Activated naive CD4-positive, alpha-beta T cell treated with anti-CD3 and anti-CD28 coated beads for 36 hours (primary cell): ENCODE measurements at regions of chr17 and their contacts with region 1.

Region 1: GRCh38 chr17:42287926-42288802 is at the start of gene STAT5A:
- DNase-seq: peak; percentile 88
- H3K4me3 Mint-ChIP-seq: peak within 1 kb of the TSS; percentile 86
- H3K27ac Mint-ChIP-seq: peak within 1 kb of the TSS; percentile 95
- H3K4me1 Mint-ChIP-seq: peaks cover 68% of the 10 kb centered on the region
- H3K27me3 Mint-ChIP-seq: no peaks in the 10 kb centered on the region
- total RNA-seq, gene STAT5A: 165 to 174 TPM

Region 2: DNA sequence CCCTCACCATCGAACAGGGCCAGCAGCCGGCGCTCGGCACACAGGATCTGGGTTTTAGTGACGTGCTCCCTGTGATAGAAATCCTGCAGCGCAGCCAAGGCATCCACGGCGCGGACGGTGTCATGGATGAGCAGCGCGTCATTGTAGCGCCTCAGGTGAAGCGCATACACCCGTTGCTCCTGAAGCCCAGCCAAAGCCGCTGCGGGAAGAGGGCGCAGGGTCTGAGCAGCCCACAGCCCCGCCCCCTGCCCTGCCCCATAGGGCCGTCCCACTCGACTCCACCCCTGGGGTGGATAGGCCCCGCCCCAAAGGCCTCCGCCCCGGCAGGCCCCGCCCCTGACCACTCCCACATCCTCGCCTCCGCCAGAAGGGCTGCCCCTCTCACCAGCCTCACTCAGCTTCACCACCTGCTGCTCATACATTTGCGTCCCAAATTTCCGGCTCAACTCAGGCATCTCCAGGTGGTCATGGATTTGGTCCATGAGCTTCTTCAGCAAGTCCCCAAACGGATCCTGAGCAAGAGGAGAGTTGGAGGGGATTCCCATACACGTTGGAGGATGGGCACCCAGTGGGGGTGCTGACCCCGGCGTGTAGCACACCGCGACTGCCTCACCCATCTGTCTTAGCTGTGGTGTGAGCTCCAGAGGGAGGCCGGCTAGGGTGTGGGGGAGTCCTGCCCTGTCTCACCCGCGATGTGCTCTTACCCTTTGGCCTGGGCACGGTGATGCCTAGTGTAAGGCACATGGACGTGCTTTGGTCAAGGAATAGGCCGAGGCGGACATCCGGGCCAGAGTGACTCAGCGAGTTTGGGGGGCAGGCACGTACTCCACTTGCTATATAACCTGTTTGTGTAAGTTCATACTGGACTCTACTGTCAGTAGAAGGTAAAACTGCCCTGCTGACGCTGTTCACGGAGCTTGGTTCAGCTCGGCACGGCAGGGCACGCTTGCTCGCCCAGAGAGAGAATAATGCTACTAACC is 180.3 kb before region 1 on chr17:
- CTCF ChIA-PET with region 1: no interaction called
- intact Hi-C with region 1: no loop called
- DNase-seq: peak; percentile 95
- H3K4me3 Mint-ChIP-seq: peak overlapping the region; percentile 66
- H3K27ac Mint-ChIP-seq: no peak overlapping the region
- H3K4me1 Mint-ChIP-seq: peaks cover 34% of the 10 kb centered on the region
- H3K27me3 Mint-ChIP-seq: no peaks in the 10 kb centered on the region

Region 3: DNA sequence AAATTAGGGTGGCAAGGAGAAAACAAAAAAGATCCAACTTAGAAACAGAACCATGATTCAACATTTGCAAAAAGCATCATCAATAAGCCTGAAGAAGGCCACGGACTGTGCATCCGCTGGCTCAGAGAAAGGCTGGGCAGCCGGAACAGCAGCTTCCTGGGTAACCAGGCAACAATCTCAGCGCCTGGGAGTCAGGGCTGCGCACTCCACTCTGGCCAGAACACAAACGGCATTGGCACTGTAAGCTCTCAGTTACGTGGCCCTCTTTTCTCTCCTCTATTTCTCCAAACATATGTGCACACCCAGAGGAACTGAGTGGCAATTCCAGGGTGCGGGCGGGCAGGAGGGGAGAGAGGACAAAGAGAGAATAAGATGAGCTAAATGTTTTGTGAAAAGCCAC is 87.5 kb before region 1 on chr17:
- CTCF ChIA-PET with region 1: no interaction called
- intact Hi-C with region 1: no loop called
- DNase-seq: no peak
- H3K4me3 Mint-ChIP-seq: no peak overlapping the region
- H3K27ac Mint-ChIP-seq: peak overlapping the region; percentile 25
- H3K4me1 Mint-ChIP-seq: peaks cover 2% of the 10 kb centered on the region
- H3K27me3 Mint-ChIP-seq: no peaks in the 10 kb centered on the region

Region 4: DNA sequence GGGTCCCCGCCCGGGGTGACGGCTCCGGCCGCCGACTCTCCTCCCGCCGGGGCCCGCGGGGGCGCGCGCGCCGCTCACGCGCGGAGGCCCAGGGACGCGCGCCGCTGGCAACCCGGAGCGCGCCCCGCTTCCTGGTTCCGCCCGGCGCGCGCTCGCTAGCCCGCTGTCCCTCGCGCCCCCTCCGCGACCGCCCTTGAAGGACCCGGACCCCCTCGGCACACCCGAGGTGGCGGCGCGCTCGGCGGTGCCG is 11.9 kb before region 1 on chr17 and contains the start of gene STAT5B:
- CTCF ChIA-PET with region 1: interaction called, 3 read pairs
- intact Hi-C with region 1: loop called (anchors 1 kb)
- DNase-seq: peak; percentile 62
- H3K4me3 Mint-ChIP-seq: peak within 1 kb of the TSS; percentile 96
- H3K27ac Mint-ChIP-seq: peak within 1 kb of the TSS; percentile 97
- H3K4me1 Mint-ChIP-seq: peaks cover 35% of the 10 kb centered on the region
- H3K27me3 Mint-ChIP-seq: no peaks in the 10 kb centered on the region
- total RNA-seq, gene STAT5B: 185 to 192 TPM

Region 5: GRCh38 chr17:42809250-42809649 is 521.1 kb after region 1 on chr17:
- CTCF ChIA-PET with region 1: no interaction called
- intact Hi-C with region 1: no loop called
- DNase-seq: no peak
- H3K4me3 Mint-ChIP-seq: no peak overlapping the region
- H3K27ac Mint-ChIP-seq: peak overlapping the region; percentile 1
- H3K4me1 Mint-ChIP-seq: no peaks in the 10 kb centered on the region
- H3K27me3 Mint-ChIP-seq: no peaks in the 10 kb centered on the region